HEK293 (cell line): ENCODE measurements at regions of chr2 and their contacts with region 1.

Region 1: GRCh38 chr2:148687543-148687942 is 43.0 kb downstream of the EPC2 start:
- H3K4me3 ChIP-seq: no peak overlapping the region
- H3K27ac ChIP-seq: no peak overlapping the region
- H3K4me1 ChIP-seq: no peaks in the 10 kb centered on the region
- CTCF ChIP-seq: no peak

Region 2: DNA sequence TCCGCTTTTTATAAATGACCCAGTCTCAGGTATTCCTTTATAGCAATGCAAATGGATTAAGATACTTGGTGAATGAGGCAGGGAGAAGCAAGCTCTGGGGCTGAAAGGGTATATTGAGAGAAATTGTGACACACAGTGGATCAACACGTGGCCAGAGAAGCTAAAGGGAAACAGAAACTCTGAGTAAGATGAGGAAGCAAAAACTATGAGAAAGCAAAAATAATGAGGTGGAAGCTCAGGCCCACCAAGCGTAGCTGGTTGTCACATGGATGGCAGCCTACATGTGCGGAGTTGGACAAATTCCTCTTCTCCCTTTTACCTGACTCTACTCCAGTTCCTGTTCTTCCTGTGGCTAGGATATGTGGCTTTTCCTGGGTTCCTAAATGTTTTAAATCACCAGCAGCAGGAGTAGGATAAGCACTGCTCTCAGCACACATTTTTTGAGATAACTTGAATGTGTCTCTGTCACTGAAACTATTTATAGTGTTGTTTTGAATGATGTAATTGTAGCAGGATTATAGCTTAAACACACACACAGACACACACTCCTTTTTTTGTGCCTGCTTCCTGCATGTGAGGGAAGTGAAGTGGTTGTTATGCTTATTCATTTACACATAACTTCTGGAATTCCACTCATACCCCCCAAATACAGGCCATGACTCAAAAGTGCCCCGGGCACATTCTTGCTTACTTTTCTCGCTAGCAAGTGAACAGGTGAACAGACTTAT is 73.1 kb before region 1 on chr2:
- CTCF ChIA-PET with region 1: no interaction called
- POLR2A ChIA-PET with region 1: no interaction called
- H3K4me3 ChIP-seq: no peak overlapping the region
- H3K27ac ChIP-seq: no peak overlapping the region
- H3K4me1 ChIP-seq: peaks cover 10% of the 10 kb centered on the region
- CTCF ChIP-seq: no peak

Region 3: GRCh38 chr2:148674063-148675020 is 13.2 kb before region 1 on chr2:
- CTCF ChIA-PET with region 1: interaction called, 11 read pairs
- POLR2A ChIA-PET with region 1: no interaction called
- H3K4me3 ChIP-seq: no peak overlapping the region
- H3K27ac ChIP-seq: no peak overlapping the region
- H3K4me1 ChIP-seq: peaks cover 9% of the 10 kb centered on the region
- CTCF ChIP-seq: no peak

Region 4: DNA sequence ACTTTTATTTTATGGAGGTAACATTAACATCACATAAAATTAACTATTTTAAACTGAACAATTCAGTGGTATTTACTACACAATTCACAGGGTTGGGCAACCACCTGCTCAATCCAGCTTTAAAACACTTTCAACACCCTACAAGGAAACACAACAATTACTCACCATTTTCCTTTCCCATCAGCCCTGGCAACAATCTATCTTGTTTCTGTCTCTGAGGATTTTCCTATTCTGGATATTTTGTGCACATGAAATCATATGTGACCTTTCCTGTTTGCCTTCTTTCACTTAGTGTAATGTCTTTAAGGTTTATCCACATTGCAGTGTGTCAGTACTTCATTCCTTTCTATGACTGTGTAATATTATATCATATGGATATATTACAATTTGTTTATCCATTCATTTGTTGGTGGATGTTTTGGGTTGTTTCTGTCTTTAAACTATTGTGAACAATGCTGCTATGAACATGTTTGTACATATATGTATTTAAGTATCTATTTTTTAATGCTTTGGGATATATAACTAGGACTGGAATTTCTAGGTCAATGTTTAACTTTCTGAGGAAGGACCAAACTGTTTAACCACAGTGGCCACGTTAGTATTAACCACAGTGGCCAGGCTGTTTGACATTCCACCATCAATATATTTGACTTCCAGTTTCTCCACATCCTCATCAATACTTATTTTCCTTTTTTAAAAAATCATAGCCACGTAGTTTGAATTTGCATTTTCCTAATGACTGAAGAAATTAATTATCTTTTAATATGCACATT is 115.1 kb after region 1 on chr2:
- CTCF ChIA-PET with region 1: no interaction called
- POLR2A ChIA-PET with region 1: no interaction called
- H3K4me3 ChIP-seq: no peak overlapping the region
- H3K27ac ChIP-seq: no peak overlapping the region
- H3K4me1 ChIP-seq: no peaks in the 10 kb centered on the region
- CTCF ChIP-seq: no peak